Heart left ventricle (tissue), 16 donors: ENCODE measurements at regions of chr9 and their contacts with region 1.

Region 1: DNA sequence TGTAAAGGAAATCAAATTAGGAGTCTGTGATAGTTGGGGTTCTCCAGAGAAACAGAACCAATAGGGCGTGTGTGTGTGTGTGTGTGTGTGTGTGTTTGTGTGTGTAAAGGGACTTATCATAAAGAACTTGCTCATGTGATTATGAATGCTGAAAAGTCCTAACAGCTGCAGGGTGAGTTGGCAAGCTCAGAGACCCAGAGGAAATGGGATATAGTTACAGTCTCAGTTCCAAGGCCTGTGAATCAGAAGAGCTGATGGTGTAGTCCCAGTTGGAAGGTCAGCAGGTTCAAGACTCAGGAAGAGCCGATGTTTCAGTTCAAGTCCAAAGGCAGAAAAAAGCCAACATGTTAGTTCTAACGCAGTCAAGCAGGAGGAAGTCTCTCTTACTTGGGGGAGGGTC is 214.2 kb downstream of the ELAVL2 start:
- DNase-seq: no peak
- ATAC-seq: peak in 1 of 4 donors; percentile 20
- H3K4me3 ChIP-seq: no peak overlapping the region
- H3K27ac ChIP-seq: no peak overlapping the region
- H3K4me1 ChIP-seq: peaks cover 0 to 6% (median 0%) of the 10 kb centered on the region in 12 donors
- H3K27me3 ChIP-seq: no peaks in the 10 kb centered on the region
- CTCF ChIP-seq: no peak
- POLR2A ChIP-seq: no peak

Region 2: GRCh38 chr9:23555851-23556250 is 56.0 kb before region 1 on chr9:
- intact Hi-C with region 1: loop called in 1 of 10 experiments (anchors 10 kb)
- DNase-seq: no peak
- ATAC-seq: no peak
- H3K4me3 ChIP-seq: no peak overlapping the region
- H3K27ac ChIP-seq: no peak overlapping the region
- H3K4me1 ChIP-seq: no peaks in the 10 kb centered on the region
- H3K27me3 ChIP-seq: no peaks in the 10 kb centered on the region
- CTCF ChIP-seq: no peak
- POLR2A ChIP-seq: no peak

Region 3: GRCh38 chr9:23663536-23663935 is 51.7 kb after region 1 on chr9:
- intact Hi-C with region 1: loop called in 1 of 10 experiments (anchors 5 kb)
- DNase-seq: no peak
- ATAC-seq: no peak
- H3K4me3 ChIP-seq: no peak overlapping the region
- H3K27ac ChIP-seq: no peak overlapping the region
- H3K4me1 ChIP-seq: peaks cover 0 to 11% (median 0%) of the 10 kb centered on the region in 12 donors
- H3K27me3 ChIP-seq: no peaks in the 10 kb centered on the region
- CTCF ChIP-seq: no peak
- POLR2A ChIP-seq: no peak

Region 4: GRCh38 chr9:23674016-23674585 is 62.2 kb after region 1 on chr9:
- intact Hi-C with region 1: no loop called
- DNase-seq: no peak
- ATAC-seq: no peak
- H3K4me3 ChIP-seq: no peak overlapping the region
- H3K27ac ChIP-seq: no peak overlapping the region
- H3K4me1 ChIP-seq: no peaks in the 10 kb centered on the region
- H3K27me3 ChIP-seq: no peaks in the 10 kb centered on the region
- CTCF ChIP-seq: no peak
- POLR2A ChIP-seq: no peak